ENCODE measurements at regions of chr1 and their contacts with region 1.

Region 1: DNA sequence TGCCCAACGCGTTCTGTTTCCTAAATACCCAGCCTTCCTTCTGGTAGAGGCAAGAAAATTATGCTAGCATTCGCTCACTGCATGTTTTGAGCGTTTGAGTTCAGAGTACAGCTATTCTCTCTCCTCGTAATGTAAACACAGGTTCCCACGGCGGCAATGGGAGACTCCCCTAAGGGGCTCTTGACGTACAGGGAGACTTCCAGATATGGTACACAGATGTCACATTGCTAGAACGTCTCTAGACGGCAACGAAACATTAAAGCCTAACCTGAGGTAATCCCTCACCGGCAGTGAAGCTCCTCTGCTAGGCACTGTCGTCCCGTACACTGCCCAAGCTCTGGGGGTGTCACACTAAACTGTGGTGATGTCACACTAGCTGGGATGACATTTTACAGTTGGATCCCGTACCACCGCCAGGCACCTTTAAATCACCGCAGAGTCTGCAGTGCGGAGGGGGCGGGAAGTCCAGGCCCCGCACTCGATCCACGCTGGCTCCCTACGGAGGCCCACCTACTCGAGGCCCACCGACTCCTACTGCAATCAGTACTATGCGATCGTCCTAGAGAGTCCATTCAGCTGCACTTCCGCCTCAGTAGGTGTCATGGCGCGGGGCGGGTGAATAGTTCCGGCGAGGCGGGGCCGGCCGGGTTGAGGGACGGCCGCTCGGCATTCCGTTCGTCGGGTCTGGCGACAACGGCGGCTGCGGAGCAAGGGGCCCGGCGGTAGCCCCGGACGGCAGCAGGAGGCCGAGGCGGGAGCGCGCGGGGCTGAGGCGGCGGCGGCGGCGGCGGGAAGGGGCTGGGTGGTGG is at the start of gene HIPK1:
- DNase-seq: peak; percentile 97
- H3K4me3 ChIP-seq: peak within 1 kb of the TSS; percentile 84 to 96
- H3K27ac ChIP-seq: peak within 1 kb of the TSS; percentile 87 to 95
- H3K4me1 ChIP-seq: peaks cover 29% of the 10 kb centered on the region
- H3K27me3 ChIP-seq: no peaks in the 10 kb centered on the region
- CTCF ChIP-seq: peak in 2 of 3 experiments; percentile 10 to 22
- POLR2A ChIP-seq: no peak
- total RNA-seq, gene HIPK1: 102 to 128 TPM

Region 2: GRCh38 chr1:113904674-113905434 is 24.3 kb before region 1 on chr1 and contains the starts of genes AP4B1 and DCLRE1B:
- intact Hi-C with region 1: loop called (anchors 2 kb)
- DNase-seq: peak; percentile 99
- H3K4me3 ChIP-seq: peak within 1 kb of the TSS; percentile 77 to 82
- H3K27ac ChIP-seq: peak within 1 kb of the TSS; percentile 69 to 90
- H3K4me1 ChIP-seq: peaks cover 9% of the 10 kb centered on the region
- H3K27me3 ChIP-seq: no peaks in the 10 kb centered on the region
- CTCF ChIP-seq: peak; percentile 48 to 76 (median 67)
- POLR2A ChIP-seq: no peak
- total RNA-seq, gene AP4B1: 23.4 to 49.6 TPM
- total RNA-seq, gene DCLRE1B: 7.7 to 8.3 TPM

Region 3: DNA sequence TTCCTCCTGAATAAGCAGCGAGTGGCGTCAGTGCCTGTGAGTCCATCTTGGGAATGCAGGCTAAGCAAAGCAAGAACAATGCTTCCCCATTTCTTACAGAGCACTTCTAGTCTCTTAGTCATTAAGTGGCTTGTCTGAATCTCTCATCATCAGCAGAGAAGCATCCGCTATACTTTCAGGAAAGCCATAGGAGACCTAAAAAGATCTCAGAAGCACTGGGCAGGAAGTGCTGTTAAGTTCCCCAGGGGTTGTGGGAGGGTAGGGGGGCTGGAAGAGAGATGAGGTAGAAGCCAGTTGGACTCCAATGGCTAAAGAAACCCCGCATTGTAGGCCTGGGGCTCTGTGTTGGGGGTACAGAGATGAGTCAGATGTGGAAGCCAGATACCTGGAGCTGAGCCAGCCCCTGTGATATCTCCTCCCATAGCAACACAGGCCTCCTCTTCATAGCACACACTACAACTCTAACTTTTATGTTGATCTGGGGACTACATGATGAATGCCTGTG is 179.7 kb after region 1 on chr1:
- intact Hi-C with region 1: no loop called
- DNase-seq: no peak
- H3K4me3 ChIP-seq: no peak overlapping the region
- H3K27ac ChIP-seq: no peak overlapping the region
- H3K4me1 ChIP-seq: no peaks in the 10 kb centered on the region
- H3K27me3 ChIP-seq: no peaks in the 10 kb centered on the region
- CTCF ChIP-seq: no peak
- POLR2A ChIP-seq: no peak